Activated CD4-positive, alpha-beta T cell treated with anti-CD3 and anti-CD28 coated beads, Interleukin-2, amount 10 ng/mL, durations not matched to agents 7 days and 5 days (primary cell): ENCODE measurements at regions of chr15 and their contacts with region 1.

Region 1: DNA sequence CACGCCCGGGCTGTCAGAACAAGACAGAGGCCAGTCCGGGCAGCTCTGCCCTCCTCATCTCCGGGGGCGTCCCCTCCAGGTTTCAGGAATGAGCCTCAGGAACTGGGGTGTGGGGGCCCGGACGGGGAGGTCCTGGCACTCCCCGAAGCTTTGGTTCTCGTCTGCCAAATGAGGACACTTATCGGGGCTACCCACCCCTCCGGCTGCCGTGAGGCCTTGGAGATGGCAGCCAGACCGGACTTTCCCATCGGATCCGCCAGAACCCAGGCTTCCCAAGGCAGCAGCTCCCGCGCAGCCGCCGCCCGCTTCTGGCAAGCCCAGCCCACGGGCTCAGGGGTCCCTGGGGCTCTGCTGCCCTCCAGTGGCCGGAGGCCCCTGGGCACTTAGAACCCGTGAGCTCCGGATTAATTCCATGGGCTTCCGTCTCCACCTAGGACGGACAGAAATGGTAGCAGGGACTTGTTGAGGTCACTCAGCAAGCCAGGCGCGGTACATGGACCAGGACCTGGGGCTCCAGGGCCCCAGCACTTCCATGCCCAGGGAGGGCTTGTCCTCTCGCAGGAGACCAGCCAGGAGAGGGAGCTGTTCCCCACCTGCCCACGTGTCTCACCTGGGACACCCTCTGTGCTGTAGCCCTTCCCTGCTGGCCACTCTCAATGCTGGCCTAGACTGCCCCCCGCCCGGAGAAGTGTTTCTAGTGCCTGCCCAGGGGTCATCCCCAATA is 89.4 kb downstream of the LINGO1 start:
- DNase-seq: peak; percentile 78
- H3K4me3 Mint-ChIP-seq: peak overlapping the region; percentile 71
- H3K27ac Mint-ChIP-seq: no peak overlapping the region
- H3K4me1 Mint-ChIP-seq: peaks cover 14% of the 10 kb centered on the region
- H3K27me3 Mint-ChIP-seq: peaks cover 3% of the 10 kb centered on the region

Region 2: DNA sequence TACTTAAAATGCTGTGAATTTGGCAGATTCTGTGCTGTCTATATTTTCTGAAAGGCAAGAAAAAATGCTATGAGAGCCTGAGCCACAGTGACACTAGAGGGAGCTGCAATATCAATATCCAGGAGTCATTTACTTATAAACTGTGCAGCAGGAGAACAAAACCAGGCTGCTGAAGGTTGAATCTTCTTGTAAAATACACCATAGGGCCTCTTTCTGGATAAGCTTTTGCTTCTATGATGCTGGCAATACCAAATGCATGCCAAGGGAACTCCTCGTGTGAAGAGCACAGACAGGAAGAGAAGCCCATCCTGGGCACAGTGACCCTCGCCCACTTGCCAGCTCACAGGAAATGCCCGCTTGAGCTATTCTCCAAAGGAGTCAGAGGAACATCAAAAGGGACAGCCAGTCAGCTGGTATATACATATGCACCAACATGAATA is 424.4 kb before region 1 on chr15:
- CTCF ChIA-PET with region 1: interaction called, 23 read pairs
- POLR2A ChIA-PET with region 1: no interaction called
- DNase-seq: peak; percentile 65
- H3K4me3 Mint-ChIP-seq: no peak overlapping the region
- H3K27ac Mint-ChIP-seq: no peak overlapping the region
- H3K4me1 Mint-ChIP-seq: peaks cover 14% of the 10 kb centered on the region
- H3K27me3 Mint-ChIP-seq: no peaks in the 10 kb centered on the region

Region 3: DNA sequence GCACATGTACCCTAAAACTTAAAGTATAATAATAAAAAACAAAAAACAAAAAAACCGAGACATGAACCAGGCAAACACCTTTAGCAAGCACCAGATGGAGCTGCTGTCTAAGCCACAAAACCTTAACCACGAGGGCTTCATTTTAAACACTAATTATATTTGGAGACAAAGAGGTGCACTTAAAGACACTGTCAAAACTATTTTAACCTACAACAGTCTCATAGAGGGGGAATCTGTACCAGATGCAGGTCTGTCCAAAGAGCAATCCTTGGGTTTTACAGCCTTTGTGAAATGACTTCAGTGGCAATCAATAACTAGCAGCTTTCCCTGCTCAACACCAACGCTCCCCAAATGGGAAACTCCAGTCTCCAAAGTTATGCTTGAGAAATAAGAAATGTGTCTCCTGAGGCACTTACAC is 356.7 kb before region 1 on chr15:
- CTCF ChIA-PET with region 1: interaction called, 13 read pairs
- POLR2A ChIA-PET with region 1: no interaction called
- DNase-seq: peak; percentile 40
- H3K4me3 Mint-ChIP-seq: no peak overlapping the region
- H3K27ac Mint-ChIP-seq: no peak overlapping the region
- H3K4me1 Mint-ChIP-seq: peaks cover 47% of the 10 kb centered on the region
- H3K27me3 Mint-ChIP-seq: no peaks in the 10 kb centered on the region

Region 4: DNA sequence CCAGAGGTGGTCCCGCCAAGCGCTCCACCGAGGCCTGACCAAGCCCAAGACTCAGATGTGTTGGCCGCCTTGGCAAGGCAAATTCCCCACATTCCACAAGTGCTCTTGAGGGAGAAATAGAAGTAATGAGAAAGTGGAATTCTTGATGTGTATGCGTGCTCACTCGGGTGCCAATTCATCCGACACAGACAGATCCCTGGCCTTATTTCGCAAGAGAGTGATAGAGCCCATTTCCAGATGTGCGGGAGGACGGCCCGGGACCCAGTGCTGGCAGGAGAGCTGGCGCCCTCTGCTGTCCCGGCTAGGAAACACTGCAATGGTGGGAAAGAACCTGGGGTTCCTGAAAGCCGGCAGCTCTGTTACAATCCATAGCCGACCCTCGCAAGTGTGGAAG is 46.6 kb before region 1 on chr15:
- CTCF ChIA-PET with region 1: interaction called, 11 read pairs
- POLR2A ChIA-PET with region 1: no interaction called
- DNase-seq: peak; percentile 72
- H3K4me3 Mint-ChIP-seq: no peak overlapping the region
- H3K27ac Mint-ChIP-seq: no peak overlapping the region
- H3K4me1 Mint-ChIP-seq: peaks cover 19% of the 10 kb centered on the region
- H3K27me3 Mint-ChIP-seq: no peaks in the 10 kb centered on the region

Region 5: DNA sequence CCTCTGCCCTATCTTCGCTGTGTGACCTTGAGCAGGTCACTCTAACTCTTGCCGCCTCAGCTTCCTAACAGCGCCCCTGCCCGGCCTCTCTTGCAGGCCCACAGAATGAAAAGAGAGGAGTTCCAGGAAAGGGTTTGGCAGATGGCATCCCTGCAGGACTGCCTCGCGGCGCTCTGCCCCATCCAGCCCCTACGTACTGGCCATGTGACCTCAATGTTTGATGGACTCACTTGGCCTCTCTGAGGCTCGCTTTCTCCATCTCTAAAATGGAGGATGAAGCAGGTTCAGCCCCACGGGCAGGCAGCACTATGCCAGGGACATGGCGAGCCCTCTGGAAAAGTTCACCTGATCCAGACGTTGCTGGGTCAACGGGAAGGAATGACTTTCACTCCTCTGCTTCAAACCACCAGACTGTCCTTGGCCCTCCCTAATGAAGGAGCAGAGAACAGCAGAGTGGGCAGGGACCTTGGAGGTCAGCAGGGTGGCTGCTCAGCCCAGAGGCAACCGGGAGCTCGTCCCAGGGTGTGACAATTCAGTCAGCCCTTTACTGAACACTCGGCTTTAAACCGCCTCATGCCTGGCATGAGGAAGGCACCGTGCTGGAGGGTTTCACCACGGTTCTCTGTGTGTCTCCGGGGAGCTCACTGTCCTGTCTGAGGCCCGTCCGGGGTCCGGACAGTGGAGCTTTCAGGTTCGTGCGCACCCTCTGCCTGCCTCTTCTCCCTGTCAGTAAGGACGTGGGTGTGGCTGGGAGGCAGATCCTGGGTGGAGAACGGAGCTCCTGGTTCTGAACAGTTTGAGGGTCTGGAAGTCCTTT is 12.0 kb before region 1 on chr15:
- CTCF ChIA-PET with region 1: interaction called, 19 read pairs
- POLR2A ChIA-PET with region 1: no interaction called
- DNase-seq: no peak
- H3K4me3 Mint-ChIP-seq: no peak overlapping the region
- H3K27ac Mint-ChIP-seq: no peak overlapping the region
- H3K4me1 Mint-ChIP-seq: no peaks in the 10 kb centered on the region
- H3K27me3 Mint-ChIP-seq: peaks cover 5% of the 10 kb centered on the region

Region 6: DNA sequence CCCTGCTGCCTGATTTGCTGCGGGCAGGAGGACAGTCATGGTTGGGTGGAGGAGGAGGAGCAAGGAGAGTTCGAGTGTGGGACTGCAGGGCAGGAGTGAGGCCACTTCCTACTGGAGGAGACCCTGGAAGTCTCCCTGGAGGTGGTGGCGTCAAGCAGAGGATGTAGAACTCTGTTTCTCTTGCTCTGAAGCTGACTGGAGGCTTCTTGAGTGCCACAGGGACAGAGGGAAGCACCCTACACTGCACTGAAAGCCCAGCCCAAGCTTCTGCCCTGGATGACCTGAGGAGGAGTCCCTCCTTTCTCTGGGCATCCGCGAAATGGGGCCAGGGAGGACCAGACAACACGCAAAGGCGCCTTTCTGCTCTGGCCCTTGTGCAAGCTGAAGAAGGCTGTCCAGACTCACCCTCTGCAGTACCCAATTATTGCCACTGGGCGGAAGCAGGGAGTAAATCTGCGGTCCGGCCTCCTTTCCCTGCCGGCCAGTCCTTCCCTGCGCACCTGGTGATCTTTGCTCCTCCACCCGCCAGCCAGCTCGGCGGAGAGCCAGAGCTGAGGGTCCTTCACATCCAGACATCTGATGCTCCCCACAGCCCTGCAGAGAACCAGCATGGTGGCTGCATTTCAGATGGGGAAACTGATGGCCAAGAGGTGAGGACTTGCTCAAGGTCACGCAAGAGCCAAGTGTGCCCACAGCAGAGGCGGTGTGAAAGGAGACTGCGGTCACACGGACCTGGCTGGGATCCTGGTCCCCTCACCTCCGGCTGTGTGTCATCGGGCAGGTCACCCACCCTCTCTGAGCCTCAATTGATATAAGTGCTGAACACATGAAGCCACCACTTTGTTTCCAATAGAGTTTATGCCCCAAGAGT is 327.1 kb after region 1 on chr15:
- CTCF ChIA-PET with region 1: no interaction called
- POLR2A ChIA-PET with region 1: no interaction called
- DNase-seq: peak; percentile 37
- H3K4me3 Mint-ChIP-seq: no peak overlapping the region
- H3K27ac Mint-ChIP-seq: no peak overlapping the region
- H3K4me1 Mint-ChIP-seq: no peaks in the 10 kb centered on the region
- H3K27me3 Mint-ChIP-seq: no peaks in the 10 kb centered on the region